ENCODE measurements at regions of chr1 and their contacts with region 1.

Region 1: GRCh38 chr1:204828338-204828850 is 42.3 kb upstream of the NFASC start:
- DNase-seq: peak; percentile 75 to 98 (median 86)

Region 2: DNA sequence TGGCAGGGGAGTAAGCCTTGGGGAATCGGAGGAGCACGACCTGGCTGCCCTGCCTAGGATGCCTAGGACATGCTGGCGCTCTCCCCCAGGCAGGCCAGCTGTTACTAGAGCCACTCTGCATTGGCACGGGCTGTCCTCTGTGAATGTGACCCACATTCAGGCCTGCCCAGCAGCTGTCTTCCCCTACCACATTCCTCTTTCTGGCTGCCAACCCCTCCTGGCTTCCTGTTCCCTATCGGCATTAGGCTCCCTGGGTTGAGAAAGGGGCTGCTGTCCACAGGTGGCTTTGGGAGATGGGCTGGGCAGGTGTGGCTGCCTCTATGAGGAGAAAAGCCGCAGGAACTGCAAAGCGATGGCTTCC is 39.9 kb after region 1 on chr1:
- intact Hi-C with region 1: loop called (anchors 5 kb)
- DNase-seq: peak; percentile 45 to 95 (median 76)

Region 3: GRCh38 chr1:204879351-204879750 is 51.0 kb after region 1 on chr1:
- intact Hi-C with region 1: no loop called
- DNase-seq: no peak

Region 4: DNA sequence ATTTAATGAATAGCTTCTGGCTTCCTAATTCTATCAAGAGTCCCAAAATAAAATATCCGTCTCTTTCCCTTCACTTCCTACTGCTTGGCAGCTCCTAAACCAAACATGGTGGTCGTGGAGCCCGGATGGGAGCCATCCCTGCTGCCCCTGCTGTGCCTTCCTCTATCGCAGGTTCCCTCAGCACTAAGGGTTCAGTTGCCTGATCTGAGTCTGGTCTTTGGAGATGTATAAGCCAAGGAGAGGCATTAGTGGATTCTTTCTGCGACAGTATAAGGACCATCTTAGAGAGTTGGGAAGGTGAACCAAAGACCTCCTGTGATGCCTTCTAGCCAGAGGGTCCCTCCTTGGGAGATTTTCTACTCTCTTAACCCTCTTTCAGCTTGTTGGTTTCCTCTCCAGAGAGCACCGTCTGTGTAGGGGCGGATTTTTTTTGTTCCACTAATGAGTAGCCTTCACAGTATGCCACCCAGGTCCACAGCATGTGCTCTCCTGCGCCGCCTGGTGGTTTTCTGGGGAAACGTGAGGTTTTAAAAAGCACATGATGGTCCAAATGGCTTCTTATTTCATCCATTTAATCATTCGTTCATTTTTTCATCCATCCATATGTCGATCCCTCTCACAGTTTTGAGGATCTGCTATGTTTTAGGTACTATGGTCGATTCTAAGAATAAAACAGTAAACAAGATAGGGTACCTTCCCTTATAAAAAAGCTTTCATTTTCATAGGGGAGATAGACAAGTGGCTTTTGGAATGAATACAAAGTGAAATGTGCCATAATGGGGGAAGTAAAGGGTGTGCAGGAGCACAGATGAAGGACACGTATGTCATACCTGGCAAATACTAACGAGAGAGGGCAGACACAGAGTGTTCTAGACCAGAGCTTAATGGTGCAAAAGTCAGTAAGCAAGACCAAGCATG is 113.3 kb after region 1 on chr1:
- intact Hi-C with region 1: loop called (anchors 2 kb)
- DNase-seq: peak; percentile 61 to 97 (median 81)